Endothelial cell of umbilical vein (primary cell): ENCODE measurements at regions of chr18 and their contacts with region 1.

Region 1: DNA sequence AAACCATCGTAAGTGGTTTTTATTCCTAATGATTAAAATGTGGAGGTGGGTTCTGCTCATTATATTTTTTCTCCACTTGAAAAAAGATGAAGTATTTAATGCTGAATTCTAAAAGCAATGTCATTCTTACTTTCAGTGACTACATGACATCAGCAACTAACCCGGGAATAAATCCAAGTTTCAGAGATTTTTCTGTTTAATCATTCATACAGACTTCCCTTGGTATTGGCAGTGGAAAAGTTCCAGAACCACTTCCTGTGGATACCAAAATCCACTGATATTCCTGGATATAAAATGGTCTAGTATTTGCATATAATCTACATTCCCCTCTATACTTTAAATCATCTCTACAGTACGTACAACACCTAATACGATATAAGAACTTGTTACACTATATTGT is 128.6 kb downstream of the ZNF532 start:
- DNase-seq: peak; percentile 92
- H3K4me3 ChIP-seq: no peak overlapping the region
- H3K27ac ChIP-seq: peak overlapping the region; percentile 91
- H3K4me1 ChIP-seq: peaks cover 50% of the 10 kb centered on the region
- H3K27me3 ChIP-seq: no peaks in the 10 kb centered on the region
- CTCF ChIP-seq: no peak
- POLR2A ChIP-seq: no peak

Region 2: GRCh38 chr18:58590839-58591238 is 402.4 kb before region 1 on chr18:
- CTCF ChIA-PET with region 1: no interaction called
- POLR2A ChIA-PET with region 1: no interaction called
- dilution Hi-C with region 1: no loop called
- intact Hi-C with region 1: no loop called
- DNase-seq: no peak
- H3K4me3 ChIP-seq: no peak overlapping the region
- H3K27ac ChIP-seq: no peak overlapping the region
- H3K4me1 ChIP-seq: no peaks in the 10 kb centered on the region
- H3K27me3 ChIP-seq: no peaks in the 10 kb centered on the region
- CTCF ChIP-seq: no peak
- POLR2A ChIP-seq: no peak

Region 3: DNA sequence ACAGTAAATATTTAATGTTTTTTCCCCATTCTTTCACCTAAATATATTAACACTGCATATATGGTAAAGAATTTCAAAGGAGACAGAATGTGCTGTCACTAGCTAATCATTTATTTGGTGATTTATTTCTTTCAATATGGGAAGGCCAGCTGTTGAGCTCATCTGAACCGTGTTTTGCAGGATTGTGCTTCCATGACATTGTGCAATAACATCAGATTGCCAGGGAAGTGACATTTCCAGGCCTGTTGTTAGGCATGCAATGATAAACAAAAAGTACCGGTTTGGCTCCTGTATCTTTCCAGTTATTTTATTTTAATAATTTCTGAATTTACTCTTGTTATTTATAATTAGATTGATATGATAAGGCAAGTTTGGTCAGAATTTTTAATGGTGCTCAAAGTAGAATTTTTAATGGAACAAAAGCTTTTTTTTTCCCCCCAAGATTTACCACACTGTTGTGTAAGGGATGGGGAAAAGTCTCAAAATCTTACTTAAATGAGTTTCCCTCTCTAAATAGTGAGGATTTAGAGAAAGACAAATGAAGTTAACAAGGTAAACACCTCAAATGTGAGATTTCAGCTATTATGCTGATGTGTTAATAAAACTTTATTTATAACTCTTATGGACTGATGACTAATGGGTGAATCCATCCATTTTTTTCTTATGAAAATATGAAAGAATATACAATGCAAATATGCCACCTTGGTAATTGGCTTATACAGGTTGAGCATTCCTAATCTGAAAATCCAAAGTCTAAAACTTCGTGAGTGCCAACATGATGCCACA is 269.3 kb before region 1 on chr18:
- CTCF ChIA-PET with region 1: no interaction called
- POLR2A ChIA-PET with region 1: no interaction called
- dilution Hi-C with region 1: no loop called
- intact Hi-C with region 1: no loop called
- DNase-seq: no peak
- H3K4me3 ChIP-seq: no peak overlapping the region
- H3K27ac ChIP-seq: no peak overlapping the region
- H3K4me1 ChIP-seq: no peaks in the 10 kb centered on the region
- H3K27me3 ChIP-seq: no peaks in the 10 kb centered on the region
- CTCF ChIP-seq: no peak
- POLR2A ChIP-seq: no peak

Region 4: DNA sequence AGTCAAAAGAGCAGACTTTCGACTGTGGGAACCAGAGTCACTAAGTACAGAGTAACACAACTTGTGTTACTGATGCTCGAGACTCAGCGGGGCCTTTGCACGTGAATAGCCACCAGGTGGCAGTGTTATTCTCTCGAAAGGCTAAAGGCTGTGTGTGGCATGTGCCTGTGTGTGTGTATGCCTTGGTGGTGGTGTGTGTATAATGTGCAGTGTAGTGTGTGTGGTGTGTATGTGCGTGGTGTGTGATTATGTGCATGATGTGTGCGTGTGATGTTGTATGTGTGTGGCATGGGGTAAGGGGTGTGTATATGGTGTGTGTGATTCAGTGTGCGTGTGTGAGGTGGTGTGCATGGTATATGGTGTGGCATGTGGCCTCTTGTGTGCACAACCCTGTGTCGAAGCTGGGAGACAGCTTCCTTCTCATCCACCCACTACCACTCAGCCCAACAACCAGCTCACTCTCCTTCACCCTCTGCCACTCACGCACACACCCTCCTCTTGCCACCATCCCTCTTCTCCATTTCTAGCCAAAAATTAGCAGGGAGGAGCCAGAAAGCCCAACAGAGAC is 211.5 kb before region 1 on chr18:
- CTCF ChIA-PET with region 1: no interaction called
- POLR2A ChIA-PET with region 1: no interaction called
- dilution Hi-C with region 1: no loop called
- intact Hi-C with region 1: loop called (anchors 1 kb)
- DNase-seq: peak; percentile 83
- H3K4me3 ChIP-seq: no peak overlapping the region
- H3K27ac ChIP-seq: no peak overlapping the region
- H3K4me1 ChIP-seq: peaks cover 19% of the 10 kb centered on the region
- H3K27me3 ChIP-seq: no peaks in the 10 kb centered on the region
- CTCF ChIP-seq: peak; percentile 76 to 80
- POLR2A ChIP-seq: no peak

Region 5: GRCh38 chr18:58863539-58864145 is 129.6 kb before region 1 on chr18:
- CTCF ChIA-PET with region 1: no interaction called
- POLR2A ChIA-PET with region 1: no interaction called
- dilution Hi-C with region 1: no loop called
- intact Hi-C with region 1: loop called (anchors 1 kb)
- DNase-seq: peak; percentile 31
- H3K4me3 ChIP-seq: peak overlapping the region in 1 of 3 experiments; percentile 39
- H3K27ac ChIP-seq: peak overlapping the region; percentile 77
- H3K4me1 ChIP-seq: peaks cover 38% of the 10 kb centered on the region
- H3K27me3 ChIP-seq: no peaks in the 10 kb centered on the region
- CTCF ChIP-seq: peak in 1 of 2 donors; percentile 27
- POLR2A ChIP-seq: no peak

Region 6: GRCh38 chr18:58911766-58912165 is 81.5 kb before region 1 on chr18:
- CTCF ChIA-PET with region 1: interaction called, 3 read pairs
- POLR2A ChIA-PET with region 1: no interaction called
- dilution Hi-C with region 1: no loop called
- intact Hi-C with region 1: loop called (anchors 1 kb)
- DNase-seq: peak; percentile 62
- H3K4me3 ChIP-seq: no peak overlapping the region
- H3K27ac ChIP-seq: no peak overlapping the region
- H3K4me1 ChIP-seq: peaks cover 32% of the 10 kb centered on the region
- H3K27me3 ChIP-seq: no peaks in the 10 kb centered on the region
- CTCF ChIP-seq: no peak
- POLR2A ChIP-seq: no peak

Region 7: DNA sequence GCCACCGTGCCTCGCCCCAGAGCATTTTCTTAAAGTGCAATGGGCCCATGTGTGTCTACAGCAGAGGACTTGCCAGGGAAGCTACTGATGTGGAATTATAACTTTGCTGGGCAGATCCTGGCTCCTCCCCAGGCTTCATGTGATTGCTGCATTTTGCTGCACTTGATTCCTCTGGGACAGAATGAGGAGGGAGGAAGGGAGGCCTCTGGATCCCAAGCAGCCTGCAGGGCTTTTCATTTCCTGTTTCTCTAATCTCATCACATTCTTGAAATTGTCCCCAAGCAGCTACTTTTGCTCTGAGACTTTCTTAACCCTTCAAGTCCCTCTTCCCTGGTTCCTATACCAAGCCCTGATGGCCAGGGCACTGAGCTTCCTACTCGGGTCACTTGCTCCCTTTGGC is 12.0 kb after region 1 on chr18:
- CTCF ChIA-PET with region 1: interaction called, 4 read pairs
- POLR2A ChIA-PET with region 1: no interaction called
- dilution Hi-C with region 1: no loop called
- intact Hi-C with region 1: loop called (anchors 1 kb)
- DNase-seq: peak; percentile 30
- H3K4me3 ChIP-seq: no peak overlapping the region
- H3K27ac ChIP-seq: no peak overlapping the region
- H3K4me1 ChIP-seq: peaks cover 7% of the 10 kb centered on the region
- H3K27me3 ChIP-seq: no peaks in the 10 kb centered on the region
- CTCF ChIP-seq: no peak
- POLR2A ChIP-seq: no peak

Region 8: GRCh38 chr18:59056706-59057492 is 63.6 kb after region 1 on chr18:
- CTCF ChIA-PET with region 1: no interaction called
- POLR2A ChIA-PET with region 1: no interaction called
- dilution Hi-C with region 1: no loop called
- intact Hi-C with region 1: loop called (anchors 1 kb)
- DNase-seq: peak; percentile 76
- H3K4me3 ChIP-seq: no peak overlapping the region
- H3K27ac ChIP-seq: no peak overlapping the region
- H3K4me1 ChIP-seq: no peaks in the 10 kb centered on the region
- H3K27me3 ChIP-seq: peaks cover 0 to 3% of the 10 kb centered on the region in 2 experiments
- CTCF ChIP-seq: peak; percentile 77 to 87
- POLR2A ChIP-seq: no peak